Caco-2 (cell line): ENCODE measurements at regions of chr18 and their contacts with region 1.

Region 1: GRCh38 chr18:74331404-74331803 is 15.8 kb downstream of the C18orf63 start:
- DNase-seq: peak in 1 of 2 experiments; percentile 19
- H3K4me3 ChIP-seq: no peak overlapping the region
- H3K4me3 Mint-ChIP-seq: no peak overlapping the region
- H3K27ac Mint-ChIP-seq: no peak overlapping the region
- H3K4me1 ChIP-seq: peaks cover 25% of the 10 kb centered on the region
- H3K4me1 Mint-ChIP-seq: peaks cover 17% of the 10 kb centered on the region
- H3K27me3 ChIP-seq: no peaks in the 10 kb centered on the region
- H3K27me3 Mint-ChIP-seq: no peaks in the 10 kb centered on the region
- CTCF ChIP-seq: peak; percentile 18 to 19

Region 2: GRCh38 chr18:74291771-74292540 is 39.4 kb before region 1 on chr18 and contains the start of gene CYB5A:
- CTCF ChIA-PET with region 1: interaction called, 3 read pairs
- POLR2A ChIA-PET with region 1: no interaction called
- intact Hi-C with region 1: loop called (anchors 2 kb)
- DNase-seq: peak; percentile 94 to 95
- H3K4me3 ChIP-seq: peak within 1 kb of the TSS; percentile 58
- H3K4me3 Mint-ChIP-seq: peak within 1 kb of the TSS; percentile 78
- H3K27ac Mint-ChIP-seq: peak within 1 kb of the TSS; percentile 54
- H3K4me1 ChIP-seq: 0 out of 2 replicates have a peak, but pooled peaks cover 5% of the 10 kb centered on the region
- H3K4me1 Mint-ChIP-seq: peaks cover 10% of the 10 kb centered on the region
- H3K27me3 ChIP-seq: no peaks in the 10 kb centered on the region
- H3K27me3 Mint-ChIP-seq: no peaks in the 10 kb centered on the region
- CTCF ChIP-seq: no peak
- total RNA-seq, gene CYB5A: 103 and 105 TPM in 2 replicates

Region 3: GRCh38 chr18:74316259-74317170 is 14.9 kb before region 1 on chr18:
- CTCF ChIA-PET with region 1: no interaction called
- POLR2A ChIA-PET with region 1: no interaction called
- intact Hi-C with region 1: loop called (anchors 2 kb)
- DNase-seq: peak in 1 of 2 experiments; percentile 35
- H3K4me3 ChIP-seq: no peak overlapping the region
- H3K4me3 Mint-ChIP-seq: no peak overlapping the region
- H3K27ac Mint-ChIP-seq: no peak overlapping the region
- H3K4me1 ChIP-seq: peaks cover 12% of the 10 kb centered on the region
- H3K4me1 Mint-ChIP-seq: no peaks in the 10 kb centered on the region
- H3K27me3 ChIP-seq: no peaks in the 10 kb centered on the region
- H3K27me3 Mint-ChIP-seq: no peaks in the 10 kb centered on the region
- CTCF ChIP-seq: no peak